Calu3 (cell line): ENCODE measurements at regions of chr1 and their contacts with region 1.

Region 1: DNA sequence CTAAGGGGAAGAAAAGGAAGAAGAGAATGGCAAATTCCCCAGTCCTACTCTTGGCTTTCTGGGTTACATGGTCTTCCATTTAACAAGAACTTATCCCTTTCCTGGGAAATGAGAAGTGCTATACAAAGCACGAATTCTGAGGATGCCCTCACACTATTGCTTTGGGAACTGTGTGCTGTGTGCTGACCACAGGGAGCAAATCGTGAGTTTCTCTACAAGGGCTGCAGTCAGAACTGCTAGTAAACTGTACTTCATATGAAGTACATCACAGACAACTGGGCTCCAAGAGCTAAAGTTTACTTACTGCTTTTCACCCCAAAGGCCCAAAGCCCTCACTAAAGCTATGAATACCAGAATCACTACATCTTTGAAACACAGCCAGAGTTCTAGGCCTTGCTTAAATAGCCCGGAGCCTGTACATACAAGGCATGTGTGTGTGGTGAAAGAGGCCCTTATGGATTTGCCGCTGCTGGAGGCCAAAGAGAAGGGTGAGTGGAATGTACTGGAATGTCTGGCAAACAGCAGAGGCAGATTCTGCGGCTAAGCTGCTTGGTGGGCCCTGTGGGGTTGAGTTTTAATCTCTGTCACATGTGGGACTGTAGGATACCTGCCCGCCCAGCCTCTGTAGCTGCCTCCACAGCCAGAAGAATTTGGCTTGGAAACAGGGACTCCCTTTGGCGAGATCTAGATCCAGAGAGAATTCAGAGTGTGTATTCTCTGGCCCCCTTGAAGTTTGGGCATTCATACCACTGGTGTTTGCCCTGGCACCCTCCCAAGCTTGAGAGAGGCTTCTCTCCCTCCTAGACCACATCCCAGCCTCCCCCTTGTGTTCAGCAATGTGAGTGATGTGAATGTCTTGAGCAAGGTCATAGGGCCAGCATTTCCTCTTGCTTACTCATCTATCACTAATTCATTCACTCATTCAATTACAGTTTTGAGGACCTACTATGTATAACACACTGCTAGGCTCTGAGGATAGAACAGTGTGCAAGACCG is 21.9 kb upstream of the TRIM67 start:
- DNase-seq: peak; percentile 74
- H3K4me3 Mint-ChIP-seq: peak overlapping the region; percentile 5
- H3K27ac Mint-ChIP-seq: peak overlapping the region; percentile 70
- H3K4me1 Mint-ChIP-seq: peaks cover 41% of the 10 kb centered on the region
- H3K27me3 Mint-ChIP-seq: no peaks in the 10 kb centered on the region
- CTCF ChIP-seq: no peak

Region 2: DNA sequence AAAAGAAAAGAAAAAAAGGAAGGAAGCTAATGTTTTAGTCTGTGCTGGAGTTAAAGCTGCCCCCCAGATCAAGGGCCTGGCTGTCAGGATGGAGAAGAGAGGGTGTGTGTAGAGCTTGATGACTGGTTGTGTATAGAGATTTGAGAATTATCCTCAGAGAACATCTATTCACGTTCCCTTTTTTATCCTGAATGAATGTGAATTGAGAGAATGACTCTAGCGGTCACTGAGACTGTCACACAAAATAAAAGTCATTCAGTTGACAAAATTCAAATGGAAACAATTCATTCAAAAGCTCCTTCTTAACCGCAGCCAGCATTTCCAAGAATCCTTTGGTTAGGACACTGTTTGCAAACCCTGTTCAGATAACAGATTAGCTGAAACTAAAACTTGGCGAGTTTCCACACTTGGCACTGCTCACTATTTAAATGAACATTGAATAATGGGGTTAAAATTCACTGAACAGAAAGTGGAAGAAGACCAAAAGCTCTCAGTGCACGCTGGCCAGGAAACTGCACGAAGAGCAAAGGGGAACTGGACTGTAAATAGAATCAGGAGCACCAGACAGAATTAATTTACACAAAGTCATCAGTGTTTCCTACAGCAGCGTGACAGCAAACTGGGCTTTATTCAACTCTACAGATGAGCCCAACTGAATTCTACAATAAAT is 86.3 kb before region 1 on chr1:
- CTCF ChIA-PET with region 1: interaction called, 3 read pairs
- intact Hi-C with region 1: loop called (anchors 5 kb)
- DNase-seq: peak; percentile 33
- H3K4me3 Mint-ChIP-seq: peak overlapping the region; percentile 16
- H3K27ac Mint-ChIP-seq: no peak overlapping the region
- H3K4me1 Mint-ChIP-seq: peaks cover 37% of the 10 kb centered on the region
- H3K27me3 Mint-ChIP-seq: peaks cover 9% of the 10 kb centered on the region
- CTCF ChIP-seq: no peak

Region 3: DNA sequence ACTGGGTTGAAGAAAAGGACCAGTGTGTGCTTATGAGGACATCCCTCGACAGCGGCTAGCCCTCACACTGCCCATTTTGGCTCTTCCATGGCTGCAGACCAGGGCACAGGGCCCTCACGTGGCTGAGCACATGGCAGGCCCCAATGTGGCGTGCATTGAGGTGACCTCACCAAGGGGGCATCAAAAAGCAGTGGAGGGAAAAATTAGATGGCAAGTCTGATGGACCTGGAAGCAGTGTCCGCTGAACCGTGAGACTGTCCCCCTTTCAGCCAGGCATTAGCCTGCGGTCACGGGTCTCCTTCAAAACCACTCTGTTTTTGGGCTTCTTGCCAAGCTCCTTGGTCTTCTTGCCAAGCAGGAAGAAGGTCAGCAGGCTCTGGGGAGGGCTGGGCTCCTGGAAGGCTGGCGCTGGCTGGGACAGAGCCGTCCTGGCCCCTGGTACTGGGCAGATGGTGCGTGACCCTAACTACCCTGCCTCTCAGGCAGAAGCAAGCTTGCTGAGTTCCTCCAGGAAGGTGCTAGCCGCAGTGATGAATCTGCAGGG is 52.7 kb after region 1 on chr1:
- CTCF ChIA-PET with region 1: no interaction called
- intact Hi-C with region 1: loop called (anchors 2 kb)
- DNase-seq: peak; percentile 92
- H3K4me3 Mint-ChIP-seq: no peak overlapping the region
- H3K27ac Mint-ChIP-seq: no peak overlapping the region
- H3K4me1 Mint-ChIP-seq: peaks cover 35% of the 10 kb centered on the region
- H3K27me3 Mint-ChIP-seq: peaks cover 39% of the 10 kb centered on the region
- CTCF ChIP-seq: no peak